Vagina (tissue), 2 donors: ENCODE measurements at regions of chr2 and their contacts with region 1.

Region 1: DNA sequence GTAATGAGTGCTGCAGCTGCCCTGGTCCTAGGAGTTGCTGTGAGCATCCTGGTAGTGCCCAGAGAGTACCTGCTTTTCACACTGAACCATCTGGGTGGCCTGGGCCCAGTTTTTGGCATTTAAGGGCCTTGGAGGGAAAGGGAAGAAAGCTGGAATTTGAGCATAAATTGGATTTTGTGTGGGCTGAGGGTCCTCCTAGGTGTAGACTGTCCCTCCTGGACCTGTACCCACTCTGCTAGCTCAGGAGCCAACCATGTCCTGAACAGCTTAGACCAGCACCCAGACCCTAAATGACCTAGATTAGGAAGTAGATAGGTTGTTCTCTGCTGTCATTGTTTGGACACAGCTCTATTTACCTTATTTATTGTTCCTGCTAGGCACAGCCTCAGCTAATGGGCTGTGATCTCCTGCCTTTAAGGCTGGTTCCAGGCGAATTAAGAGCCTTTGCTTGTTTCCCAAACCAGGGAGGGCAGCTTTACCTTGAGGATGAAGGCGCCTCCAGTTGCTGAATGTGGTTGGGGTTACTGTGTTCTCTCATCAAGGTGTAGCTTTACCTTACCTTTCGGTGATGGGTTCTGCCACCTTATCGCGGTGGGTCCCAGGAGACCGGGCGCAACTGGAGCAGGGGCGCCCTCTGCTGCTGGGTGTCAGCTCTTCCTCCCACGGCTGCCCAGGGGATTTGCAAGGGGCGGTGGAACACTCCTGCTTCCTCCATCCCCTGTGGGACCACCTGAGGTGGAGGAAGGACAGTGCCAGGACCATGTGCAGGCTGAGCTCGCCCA is 34.4 kb downstream of the ITGA6 start:
- DNase-seq: no peak
- H3K4me3 ChIP-seq: no peak overlapping the region
- H3K27ac ChIP-seq: peak overlapping the region; percentile 2
- H3K4me1 ChIP-seq: peaks cover 44% of the 10 kb centered on the region
- H3K27me3 ChIP-seq: no peaks in the 10 kb centered on the region
- CTCF ChIP-seq: peak; percentile 33 to 72 (median 55)
- POLR2A ChIP-seq: no peak

Region 2: GRCh38 chr2:172172513-172173173 is 289.1 kb before region 1 on chr2:
- intact Hi-C with region 1: loop called (anchors 2 kb)
- DNase-seq: no peak
- H3K4me3 ChIP-seq: peak overlapping the region; percentile 53 to 63
- H3K27ac ChIP-seq: peak overlapping the region; percentile 30
- H3K4me1 ChIP-seq: peaks cover 15% of the 10 kb centered on the region
- H3K27me3 ChIP-seq: no peaks in the 10 kb centered on the region
- CTCF ChIP-seq: peak; percentile 47 to 92 (median 58)
- POLR2A ChIP-seq: no peak

Region 3: GRCh38 chr2:172516299-172516698 is 54.5 kb after region 1 on chr2:
- intact Hi-C with region 1: no loop called
- DNase-seq: peak in 1 of 2 donors; percentile 71
- H3K4me3 ChIP-seq: no peak overlapping the region
- H3K27ac ChIP-seq: no peak overlapping the region
- H3K4me1 ChIP-seq: no peaks in the 10 kb centered on the region
- H3K27me3 ChIP-seq: no peaks in the 10 kb centered on the region
- CTCF ChIP-seq: no peak
- POLR2A ChIP-seq: no peak

Region 4: DNA sequence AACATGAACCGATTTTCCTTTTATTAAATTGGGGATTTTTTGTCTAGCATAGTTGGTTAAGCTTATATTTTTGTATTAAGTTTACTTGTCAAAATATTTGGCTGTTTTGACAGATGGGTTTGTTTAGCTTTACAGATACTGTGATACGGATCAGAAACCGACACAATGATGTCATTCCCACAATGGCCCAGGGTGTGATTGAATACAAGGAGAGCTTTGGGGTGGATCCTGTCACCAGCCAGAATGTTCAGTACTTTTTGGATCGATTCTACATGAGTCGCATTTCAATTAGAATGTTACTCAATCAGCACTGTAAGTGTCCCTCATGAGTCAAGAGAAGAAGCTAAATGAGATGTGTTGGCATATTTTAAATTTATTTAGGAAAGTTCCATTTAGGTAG is 102.6 kb after region 1 on chr2:
- intact Hi-C with region 1: no loop called
- DNase-seq: no peak
- H3K4me3 ChIP-seq: no peak overlapping the region
- H3K27ac ChIP-seq: no peak overlapping the region
- H3K4me1 ChIP-seq: no peaks in the 10 kb centered on the region
- H3K27me3 ChIP-seq: no peaks in the 10 kb centered on the region
- CTCF ChIP-seq: no peak
- POLR2A ChIP-seq: no peak